Left cardiac atrium (tissue), 4 donors: ENCODE measurements at regions of chr14 and their contacts with region 1.

Region 1: DNA sequence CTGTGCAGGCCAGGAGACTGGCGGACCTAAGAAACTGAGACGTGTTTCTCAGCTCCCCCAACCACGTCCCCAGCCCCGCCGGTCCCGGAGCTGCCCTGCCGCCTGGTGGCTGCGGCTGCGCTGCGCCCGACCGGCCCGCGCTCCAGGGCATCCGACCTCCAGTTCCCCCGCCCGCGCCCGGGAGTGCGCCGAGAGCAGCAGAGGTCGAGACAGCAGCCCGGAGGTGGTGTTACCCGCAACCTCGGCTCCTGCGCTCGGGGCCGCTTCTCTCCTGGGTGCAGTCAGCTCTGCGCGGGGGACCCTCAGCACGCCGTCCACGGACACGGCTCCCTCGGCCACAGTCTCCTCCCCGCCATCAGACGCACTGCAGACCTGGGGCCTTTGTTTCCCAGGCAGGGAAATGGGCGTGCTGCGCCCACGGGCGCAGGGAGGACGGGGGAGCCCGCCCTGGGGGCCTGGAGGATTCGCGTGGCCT is 21.6 kb upstream of the GPR132 start:
- DNase-seq: peak; percentile 82
- ATAC-seq: peak; percentile 57 to 59

Region 2: DNA sequence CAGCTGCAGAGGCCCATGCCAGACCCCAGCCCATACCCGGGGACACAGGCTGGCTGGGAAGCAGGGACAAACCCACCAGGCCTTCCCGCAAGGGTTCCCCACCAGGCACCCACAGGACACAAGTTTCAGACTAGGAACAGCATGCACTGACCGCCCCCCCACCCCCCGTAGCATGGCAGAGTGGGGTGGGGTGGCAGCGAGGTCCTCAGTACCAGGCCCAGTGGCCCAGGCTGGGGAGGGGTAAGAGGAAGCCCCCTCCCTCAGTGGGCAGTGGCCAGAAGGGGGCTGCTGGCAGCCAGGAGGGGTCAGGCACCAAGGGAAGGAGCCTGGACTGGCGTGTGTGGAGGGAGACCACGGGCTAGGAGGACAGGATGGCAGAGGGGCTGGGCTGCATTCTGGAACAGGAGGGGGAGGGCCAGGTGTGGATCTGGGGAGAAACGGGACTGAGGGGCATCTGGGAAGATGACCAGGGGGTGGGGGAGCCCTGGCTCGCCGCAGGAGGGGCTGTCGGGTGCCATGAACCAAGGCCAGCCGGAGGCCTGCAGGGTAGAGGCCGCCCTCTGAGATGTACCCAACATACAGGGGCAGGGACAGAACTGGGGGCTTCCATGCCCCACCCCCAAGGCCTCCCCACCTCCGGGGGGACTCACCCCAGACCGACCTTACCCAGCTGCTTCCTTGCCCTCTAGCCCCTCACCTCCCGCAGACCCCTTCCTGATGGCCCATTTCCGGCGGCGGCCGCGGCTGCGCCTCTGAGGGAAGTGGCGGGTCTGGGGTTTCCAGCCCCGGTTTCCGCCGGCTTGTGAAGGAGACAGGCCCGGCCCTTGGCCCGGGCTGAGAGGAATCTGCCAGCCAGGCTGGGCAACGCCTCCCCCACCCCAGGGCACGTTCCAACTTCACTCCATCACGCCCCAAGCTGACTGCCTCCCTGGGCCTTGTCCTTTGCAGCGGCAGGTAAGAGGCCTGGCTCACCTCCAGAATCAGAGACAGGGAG is 87.3 kb after region 1 on chr14:
- intact Hi-C with region 1: loop called in 1 of 2 experiments (anchors 5 kb)
- DNase-seq: no peak
- ATAC-seq: no peak

Region 3: GRCh38 chr14:105281371-105282097 is 194.7 kb after region 1 on chr14:
- intact Hi-C with region 1: loop called (anchors 5 to 10 kb)
- DNase-seq: no peak
- ATAC-seq: peak; percentile 18 to 55

Region 4: GRCh38 chr14:105351920-105352851 is 265.3 kb after region 1 on chr14:
- intact Hi-C with region 1: loop called (anchors 2 to 10 kb)
- DNase-seq: peak; percentile 86
- ATAC-seq: peak; percentile 89 to 92